Gastrocnemius medialis (tissue), 4 donors: ENCODE measurements at regions of chr3 and their contacts with region 1.

Region 1: DNA sequence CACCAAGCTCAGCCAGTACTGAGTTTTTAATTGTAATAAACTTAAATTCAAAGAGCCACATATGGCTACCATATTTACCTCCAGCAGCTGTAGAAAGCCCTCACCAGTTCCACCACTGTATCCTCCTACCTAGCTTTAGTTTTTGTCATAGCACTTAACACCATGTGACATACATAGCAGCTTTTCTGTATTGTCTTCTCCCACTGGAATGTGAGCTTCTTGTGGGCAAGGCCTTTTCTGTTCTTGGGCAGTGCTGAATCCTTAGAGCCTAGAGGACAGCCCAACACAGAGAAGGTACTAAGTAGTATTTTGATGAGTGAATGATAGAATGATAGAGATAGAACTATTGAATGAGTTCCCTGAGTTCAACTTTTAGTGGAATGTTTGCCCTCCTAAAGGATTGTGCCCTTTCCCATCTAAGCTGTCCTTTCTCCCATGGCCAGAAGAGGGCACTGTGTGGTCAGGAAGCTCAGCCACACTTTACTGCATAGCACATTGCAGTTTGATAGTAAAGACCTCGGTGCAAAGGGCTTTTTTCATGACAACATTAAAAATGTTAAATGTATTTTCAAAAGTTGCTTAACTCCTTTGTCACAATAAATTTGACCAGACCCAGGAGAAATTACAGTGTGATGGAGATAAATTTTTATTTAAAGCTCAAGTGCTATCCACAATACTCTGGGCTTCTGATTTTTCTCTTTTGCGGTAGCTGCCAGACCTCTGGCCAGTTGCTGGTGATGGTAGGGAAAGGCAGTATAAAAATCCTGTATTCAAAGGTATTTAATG is 115.8 kb downstream of the GHSR start:
- DNase-seq: peak in 1 of 2 donors; percentile 48
- ATAC-seq: peak; percentile 68 to 85
- H3K4me3 ChIP-seq: no peak overlapping the region
- H3K27ac ChIP-seq: peak overlapping the region; percentile 10 to 53 (median 31)
- H3K4me1 ChIP-seq: no peaks in the 10 kb centered on the region
- H3K27me3 ChIP-seq: no peaks in the 10 kb centered on the region
- CTCF ChIP-seq: peak; percentile 72 to 90 (median 82)
- POLR2A ChIP-seq: no peak

Region 2: GRCh38 chr3:171646357-171647133 is 685.9 kb before region 1 on chr3:
- in situ Hi-C with region 1: loop called (anchors 25 kb)
- intact Hi-C with region 1: loop called (anchors 5 kb)
- DNase-seq: no peak
- ATAC-seq: peak; percentile 55 to 69
- H3K4me3 ChIP-seq: no peak overlapping the region
- H3K27ac ChIP-seq: peak overlapping the region in 2 of 4 donors; percentile 3 to 21
- H3K4me1 ChIP-seq: peaks cover 5 to 6% of the 10 kb centered on the region in 2 donors
- H3K27me3 ChIP-seq: no peaks in the 10 kb centered on the region
- CTCF ChIP-seq: peak; percentile 35 to 68 (median 39)
- POLR2A ChIP-seq: no peak

Region 3: DNA sequence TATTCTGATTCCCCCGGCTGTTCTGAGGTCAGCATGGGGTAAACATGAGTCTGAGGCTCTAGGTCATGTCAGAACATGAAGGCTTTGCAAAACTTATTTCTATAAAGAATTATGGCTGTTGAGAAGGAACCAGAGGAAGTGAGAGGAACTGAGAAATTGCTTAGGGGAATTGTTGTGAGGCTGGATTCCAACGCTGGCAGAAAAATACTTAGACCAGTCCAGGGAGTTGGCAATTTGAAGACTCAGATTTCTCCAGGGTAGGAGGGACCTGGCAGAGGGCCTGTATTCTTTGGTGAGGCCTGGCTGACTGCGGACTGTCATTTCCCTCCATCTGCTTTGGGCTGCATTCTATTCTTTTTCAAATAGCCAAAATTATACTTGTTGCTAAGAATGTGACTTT is 677.6 kb before region 1 on chr3:
- in situ Hi-C with region 1: loop called in 1 of 4 experiments (anchors 25 kb)
- intact Hi-C with region 1: no loop called
- DNase-seq: peak; percentile 68 to 79
- ATAC-seq: peak; percentile 98 to 99
- H3K4me3 ChIP-seq: no peak overlapping the region
- H3K27ac ChIP-seq: peak overlapping the region; percentile 2 to 46 (median 44)
- H3K4me1 ChIP-seq: peaks cover 8 to 14% of the 10 kb centered on the region in 2 donors
- H3K27me3 ChIP-seq: no peaks in the 10 kb centered on the region
- CTCF ChIP-seq: no peak
- POLR2A ChIP-seq: no peak